ENCODE measurements at regions of chr22 and their contacts with region 1.

Region 1: DNA sequence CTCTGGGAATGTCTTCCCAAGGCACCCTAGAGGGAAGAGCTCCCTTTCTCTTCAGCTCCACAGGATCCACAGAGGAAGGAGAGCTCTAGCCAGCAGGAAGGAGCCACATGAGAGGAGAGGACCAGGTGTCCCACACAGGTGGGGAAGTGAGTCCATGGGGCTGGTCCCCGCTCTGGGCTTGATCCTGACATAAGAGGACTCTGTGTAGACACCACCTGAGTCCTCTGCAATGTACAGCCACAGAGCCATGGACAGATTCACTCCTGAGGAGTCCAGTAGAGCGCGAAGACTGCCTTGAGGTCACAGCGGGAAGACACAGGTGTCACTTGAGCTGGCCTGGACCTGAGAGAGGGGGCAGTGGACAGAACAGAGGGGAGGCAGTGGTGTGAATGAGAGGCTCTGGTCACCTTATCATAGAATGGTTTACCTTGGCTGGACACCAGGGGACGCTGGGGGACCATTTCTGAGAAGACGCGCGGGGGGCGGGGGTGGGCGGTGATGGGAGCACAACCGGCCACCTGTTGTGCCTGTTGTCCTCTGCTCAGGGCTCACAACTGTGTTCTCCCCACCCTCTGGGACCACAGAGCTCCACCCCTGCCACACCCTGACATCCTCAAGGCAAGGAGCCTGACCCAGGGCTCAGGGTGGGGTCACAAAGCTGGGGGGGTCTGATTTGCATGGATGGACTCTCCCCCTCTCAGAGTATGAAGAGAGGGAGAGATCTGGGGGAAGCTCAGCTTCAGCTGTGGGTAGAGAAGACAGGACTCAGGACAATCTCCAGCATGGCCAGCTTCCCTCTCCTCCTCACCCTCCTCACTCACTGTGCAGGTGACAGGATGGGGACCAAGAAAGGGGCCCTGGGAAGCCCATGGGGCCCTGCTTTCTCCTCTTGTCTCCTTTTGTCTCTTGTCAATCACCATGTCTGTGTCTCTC is 128.2 kb downstream of the ZNF280B start:
- DNase-seq: peak; percentile 95
- H3K4me3 ChIP-seq: peak overlapping the region; percentile 49
- H3K27ac ChIP-seq: peak overlapping the region; percentile 70
- H3K4me1 ChIP-seq: peaks cover 85% of the 10 kb centered on the region
- CTCF ChIP-seq: peak; percentile 80

Region 2: DNA sequence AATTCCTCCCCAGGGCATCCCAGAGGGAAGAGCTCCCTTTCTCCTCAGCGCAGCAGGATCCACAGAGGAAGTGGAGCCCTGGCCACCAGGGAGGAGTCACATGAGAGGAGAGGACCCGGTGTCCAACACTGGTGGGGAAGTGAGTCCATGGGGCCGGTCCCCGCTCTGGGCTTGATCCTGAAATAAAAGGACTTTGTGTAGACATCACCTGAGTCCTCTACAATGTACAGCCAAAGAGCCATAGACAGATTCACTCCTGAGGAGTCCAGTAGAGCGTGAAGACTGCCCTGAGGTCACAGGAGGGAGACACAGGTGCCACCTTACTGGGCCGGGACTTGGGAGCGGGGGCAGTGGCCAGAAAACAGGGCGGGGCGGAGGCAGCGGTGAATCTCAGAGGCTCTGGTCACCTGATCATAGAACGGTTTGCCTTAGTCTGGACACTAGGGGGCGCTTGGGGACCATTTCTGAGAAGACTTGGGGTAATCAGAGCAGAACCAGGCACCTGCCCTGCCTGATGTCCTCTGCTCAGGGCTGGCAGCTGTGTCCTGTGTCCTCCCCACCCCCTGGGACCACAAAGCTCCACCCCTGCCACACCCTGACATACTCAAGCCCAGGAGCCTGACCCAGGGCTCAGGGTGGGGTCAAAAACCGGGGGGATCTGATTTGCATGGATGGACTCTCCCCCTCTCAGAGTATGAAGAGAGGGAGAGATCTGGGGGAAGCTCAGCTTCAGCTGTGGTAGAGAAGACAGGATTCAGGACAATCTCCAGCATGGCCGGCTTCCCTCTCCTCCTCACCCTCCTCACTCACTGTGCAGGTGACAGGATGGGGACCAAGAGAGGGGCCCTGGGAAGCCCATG is 23.1 kb before region 1 on chr22:
- CTCF ChIA-PET with region 1: interaction called, 5 read pairs
- POLR2A ChIA-PET with region 1: interaction called, 3 read pairs
- intact Hi-C with region 1: loop called (anchors 1 kb)
- DNase-seq: peak; percentile 97
- H3K4me3 ChIP-seq: peak overlapping the region; percentile 53
- H3K27ac ChIP-seq: peak overlapping the region; percentile 55
- H3K4me1 ChIP-seq: peaks cover 54% of the 10 kb centered on the region
- CTCF ChIP-seq: peak; percentile 85

Region 3: DNA sequence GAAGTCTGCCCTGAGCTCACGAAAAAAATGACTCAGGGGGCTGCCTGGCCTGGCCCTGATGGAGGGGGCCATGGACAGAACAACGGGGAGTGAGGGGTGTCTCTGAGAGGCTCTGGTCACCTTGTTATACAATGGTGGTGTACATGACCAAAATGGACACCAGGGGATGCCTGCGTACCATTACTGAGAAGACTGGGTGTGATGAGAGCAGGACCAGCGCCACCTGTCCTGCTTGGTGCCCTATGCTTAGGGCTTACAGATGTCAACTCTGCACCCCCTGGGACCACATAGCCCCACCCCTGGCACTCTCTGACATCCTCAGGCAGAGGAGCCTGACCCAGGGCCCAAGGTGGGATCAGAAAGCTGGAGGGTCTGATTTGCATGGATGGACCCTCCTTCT is 23.4 kb after region 1 on chr22:
- CTCF ChIA-PET with region 1: interaction called, 8 read pairs
- POLR2A ChIA-PET with region 1: interaction called, 10 read pairs
- intact Hi-C with region 1: no loop called
- DNase-seq: peak; percentile 80
- H3K4me3 ChIP-seq: no peak overlapping the region
- H3K27ac ChIP-seq: peak overlapping the region; percentile 79
- H3K4me1 ChIP-seq: peaks cover 82% of the 10 kb centered on the region
- CTCF ChIP-seq: peak; percentile 60

Region 4: GRCh38 chr22:22422629-22423112 is 42.3 kb after region 1 on chr22:
- CTCF ChIA-PET with region 1: interaction called, 4 read pairs
- POLR2A ChIA-PET with region 1: interaction called, 5 read pairs
- intact Hi-C with region 1: loop called (anchors 2 kb)
- DNase-seq: peak; percentile 99
- H3K4me3 ChIP-seq: peak overlapping the region; percentile 41
- H3K27ac ChIP-seq: peak overlapping the region; percentile 49
- H3K4me1 ChIP-seq: peaks cover 63% of the 10 kb centered on the region
- CTCF ChIP-seq: peak; percentile 99

Region 5: GRCh38 chr22:22463855-22464540 is 83.6 kb after region 1 on chr22:
- CTCF ChIA-PET with region 1: interaction called, 7 read pairs
- POLR2A ChIA-PET with region 1: no interaction called
- intact Hi-C with region 1: loop called (anchors 1 kb)
- DNase-seq: peak; percentile 84
- H3K4me3 ChIP-seq: peak overlapping the region; percentile 27
- H3K27ac ChIP-seq: no peak overlapping the region
- H3K4me1 ChIP-seq: peaks cover 20% of the 10 kb centered on the region
- CTCF ChIP-seq: peak; percentile 94

Region 6: GRCh38 chr22:22558972-22559603 is 178.7 kb after region 1 on chr22 and contains the start of gene PRAME:
- CTCF ChIA-PET with region 1: no interaction called
- POLR2A ChIA-PET with region 1: no interaction called
- intact Hi-C with region 1: no loop called
- DNase-seq: peak; percentile 89
- H3K4me3 ChIP-seq: no peak within 1 kb of the TSS
- H3K27ac ChIP-seq: no peak within 1 kb of the TSS
- H3K4me1 ChIP-seq: peaks cover 14% of the 10 kb centered on the region
- CTCF ChIP-seq: peak; percentile 96
- total RNA-seq, gene PRAME: 0.28 and 0.70 TPM in 2 replicates

Measured in OCI-LY7 (cell line).